ENCODE measurements at regions of chr20 and their contacts with region 1.

Region 1: DNA sequence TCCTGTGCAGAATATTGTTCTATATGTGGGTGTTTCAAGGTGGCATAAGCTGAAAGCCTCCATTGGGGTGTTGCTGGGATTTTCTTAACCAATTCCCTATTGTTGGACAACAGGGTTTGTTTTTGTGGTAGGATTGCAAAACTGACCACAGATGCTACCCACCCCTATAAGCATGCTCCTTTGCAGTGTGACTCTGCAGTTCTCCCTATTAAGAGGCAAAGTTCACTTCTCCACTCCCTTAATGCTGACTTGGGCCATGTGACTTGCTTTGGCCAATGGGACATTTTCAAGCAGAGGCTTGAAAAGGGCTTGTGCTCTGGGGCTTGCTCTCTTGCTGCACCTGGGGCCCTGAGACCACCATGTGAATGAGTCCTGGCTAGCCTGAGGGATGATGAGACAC is 8.5 kb upstream of the ANGPT4 start:
- DNase-seq: no peak
- ATAC-seq: no peak
- H3K4me3 ChIP-seq: no peak overlapping the region
- H3K27ac ChIP-seq: no peak overlapping the region
- H3K4me1 ChIP-seq: no peaks in the 10 kb centered on the region
- H3K27me3 ChIP-seq: peaks cover 5% of the 10 kb centered on the region; the same call in 1 of the 2 replicates
- CTCF ChIP-seq: no peak

Region 2: GRCh38 chr20:775679-776135 is 148.9 kb before region 1 on chr20:
- CTCF ChIA-PET with region 1: no interaction called
- POLR2A ChIA-PET with region 1: interaction called, 11 read pairs
- in situ Hi-C with region 1: no loop called
- intact Hi-C with region 1: no loop called
- DNase-seq: no peak
- ATAC-seq: no peak
- H3K4me3 ChIP-seq: no peak overlapping the region
- H3K27ac ChIP-seq: no peak overlapping the region
- H3K4me1 ChIP-seq: no peaks in the 10 kb centered on the region
- H3K27me3 ChIP-seq: no peaks in the 10 kb centered on the region
- CTCF ChIP-seq: no peak

Region 3: DNA sequence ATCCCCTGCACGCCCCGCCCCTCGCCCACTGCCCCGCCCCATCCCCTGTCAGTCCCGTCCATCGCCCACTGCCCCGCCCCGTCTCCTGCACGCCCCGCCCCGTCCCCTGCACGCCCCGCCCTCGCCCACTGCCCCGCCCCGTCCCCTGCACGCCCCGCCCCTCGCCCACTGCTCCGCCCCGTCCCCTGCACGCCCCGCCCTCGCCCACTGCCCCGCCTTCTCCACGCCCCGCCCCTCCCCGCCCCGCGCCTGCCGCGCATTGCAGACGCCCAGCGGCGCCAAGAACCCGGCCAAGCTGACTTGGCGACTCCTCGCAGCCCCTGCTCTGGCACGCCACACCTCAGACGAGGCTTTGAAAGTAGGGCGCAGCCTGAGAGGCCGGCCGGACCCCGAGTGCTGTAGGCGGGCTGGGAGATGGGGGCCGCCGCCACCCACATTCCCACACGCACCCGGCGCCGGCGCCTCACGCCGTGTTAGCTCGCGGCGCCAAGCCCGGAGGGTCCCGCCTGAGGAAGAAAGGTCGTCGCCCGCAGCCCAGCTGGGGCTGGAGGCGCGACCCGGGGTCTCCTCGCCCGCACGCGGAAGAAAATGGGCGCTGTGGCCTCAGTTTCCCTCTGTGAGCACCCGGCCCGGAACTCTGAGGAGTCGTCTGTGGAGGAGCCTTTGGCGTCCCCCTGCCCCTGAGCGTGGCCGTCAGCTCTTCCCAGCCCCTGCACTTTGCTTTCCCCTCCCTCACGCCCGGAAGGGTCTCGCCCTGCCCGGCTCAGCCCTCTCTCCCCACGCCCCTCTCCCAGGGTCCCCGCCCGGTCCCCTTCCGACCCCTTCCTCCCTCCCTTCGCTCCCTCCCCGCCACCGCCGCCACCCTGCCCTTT is 301.4 kb after region 1 on chr20 and contains the start of gene RAD21L1:
- CTCF ChIA-PET with region 1: no interaction called
- POLR2A ChIA-PET with region 1: no interaction called
- in situ Hi-C with region 1: no loop called
- intact Hi-C with region 1: no loop called
- DNase-seq: no peak
- ATAC-seq: peak; percentile 76
- H3K4me3 ChIP-seq: peak within 1 kb of the TSS; percentile 77 to 81
- H3K27ac ChIP-seq: peak within 1 kb of the TSS; percentile 66
- H3K4me1 ChIP-seq: peaks cover 8% of the 10 kb centered on the region; the same call in 1 of the 2 replicates
- H3K27me3 ChIP-seq: peaks cover 3% of the 10 kb centered on the region; the same call in 1 of the 2 replicates
- CTCF ChIP-seq: no peak
- total RNA-seq, gene RAD21L1: 1.0 TPM

Measured in Panc1 (cell line).